Tibial artery (tissue), 4 donors: ENCODE measurements at regions of chr13 and their contacts with region 1.

Region 1: DNA sequence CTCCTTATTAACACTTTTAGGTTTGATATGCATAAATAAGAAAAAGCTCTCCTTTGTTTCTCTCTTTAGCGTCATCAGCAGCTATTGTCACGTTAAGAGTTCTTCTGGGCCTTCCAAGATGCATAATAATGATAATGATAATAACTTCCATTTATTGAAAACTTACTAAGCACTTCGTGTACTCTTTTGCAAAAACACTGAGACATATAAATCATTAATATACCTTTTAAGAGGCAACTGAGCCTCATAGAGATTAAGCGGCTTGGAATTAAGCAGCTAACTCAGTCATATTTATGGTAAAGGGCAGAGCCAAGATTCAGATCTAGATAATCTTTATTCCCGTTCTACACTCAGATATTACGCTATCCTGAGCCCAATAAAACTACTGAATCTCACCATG is 1105.1 kb downstream of the OLFM4 start:
- DNase-seq: no peak
- H3K4me3 ChIP-seq: no peak overlapping the region
- H3K27ac ChIP-seq: no peak overlapping the region
- H3K4me1 ChIP-seq: no peaks in the 10 kb centered on the region
- H3K27me3 ChIP-seq: no peaks in the 10 kb centered on the region
- CTCF ChIP-seq: no peak

Region 2: DNA sequence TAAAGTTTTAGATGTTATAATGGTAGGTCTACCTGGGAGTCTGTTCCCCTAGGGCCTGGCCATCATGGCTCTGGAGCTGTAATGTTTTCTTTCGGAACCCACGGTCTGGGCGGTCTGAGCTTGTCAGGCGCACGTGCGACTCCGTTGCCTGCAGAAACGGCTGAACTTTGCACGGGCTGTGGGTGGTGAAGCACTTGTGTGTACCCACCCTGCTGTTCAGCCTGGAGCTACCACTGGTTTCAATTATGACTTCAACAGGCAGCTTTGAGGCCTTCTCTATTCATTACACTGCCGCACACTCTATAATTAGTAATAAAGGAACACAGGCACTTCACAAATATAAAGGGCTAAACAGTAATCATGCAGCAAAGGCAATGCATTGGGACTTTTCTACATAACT is 1291.3 kb before region 1 on chr13:
- intact Hi-C with region 1: loop called (anchors 5 kb)
- DNase-seq: no peak
- H3K4me3 ChIP-seq: no peak overlapping the region
- H3K27ac ChIP-seq: no peak overlapping the region
- H3K4me1 ChIP-seq: peaks cover 0 to 19% (median 15%) of the 10 kb centered on the region in 4 donors
- H3K27me3 ChIP-seq: peaks cover 0 to 55% of the 10 kb centered on the region in 2 donors
- CTCF ChIP-seq: no peak

Region 3: DNA sequence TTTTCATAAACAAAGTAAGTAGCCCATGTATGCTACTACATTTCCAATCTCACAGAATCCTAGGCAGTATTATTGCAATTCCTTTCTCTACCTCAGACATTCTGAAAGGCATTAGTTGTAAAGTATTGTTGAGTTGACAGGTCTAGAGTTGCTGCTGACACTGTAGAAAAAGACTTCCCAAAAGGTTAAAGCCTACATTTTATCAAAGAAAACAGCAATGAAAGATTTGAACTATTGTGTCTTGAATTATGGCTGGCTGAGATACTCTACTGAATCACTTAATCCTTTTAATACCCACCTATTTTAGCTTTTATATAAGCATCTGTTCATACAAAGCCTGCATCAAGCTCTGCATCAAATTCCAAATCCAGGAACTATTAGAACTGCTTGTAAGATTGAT is 23.1 kb before region 1 on chr13:
- intact Hi-C with region 1: no loop called
- DNase-seq: no peak
- H3K4me3 ChIP-seq: no peak overlapping the region
- H3K27ac ChIP-seq: no peak overlapping the region
- H3K4me1 ChIP-seq: no peaks in the 10 kb centered on the region
- H3K27me3 ChIP-seq: no peaks in the 10 kb centered on the region
- CTCF ChIP-seq: no peak